PC-9 (cell line): ENCODE measurements at regions of chrX and their contacts with region 1.

Region 1: GRCh38 chrX:108250654-108251579 is 159.3 kb downstream of the ATG4A start:
- DNase-seq: no peak
- H3K4me3 ChIP-seq: no peak overlapping the region
- H3K27ac ChIP-seq: no peak overlapping the region
- H3K4me1 ChIP-seq: peaks cover 14% of the 10 kb centered on the region
- H3K27me3 ChIP-seq: no peaks in the 10 kb centered on the region
- CTCF ChIP-seq: no peak

Region 2: GRCh38 chrX:108304210-108304609 is 53.3 kb after region 1 on chrX:
- CTCF ChIA-PET with region 1: no interaction called
- POLR2A ChIA-PET with region 1: no interaction called
- intact Hi-C with region 1: no loop called
- DNase-seq: no peak
- H3K4me3 ChIP-seq: no peak overlapping the region
- H3K27ac ChIP-seq: no peak overlapping the region
- H3K4me1 ChIP-seq: no peaks in the 10 kb centered on the region
- H3K27me3 ChIP-seq: no peaks in the 10 kb centered on the region
- CTCF ChIP-seq: peak; percentile 58

Region 3: GRCh38 chrX:108366644-108367406 is 115.9 kb after region 1 on chrX:
- CTCF ChIA-PET with region 1: no interaction called
- POLR2A ChIA-PET with region 1: interaction called, 33 read pairs
- intact Hi-C with region 1: no loop called
- DNase-seq: no peak
- H3K4me3 ChIP-seq: no peak overlapping the region
- H3K27ac ChIP-seq: no peak overlapping the region
- H3K4me1 ChIP-seq: no peaks in the 10 kb centered on the region
- H3K27me3 ChIP-seq: no peaks in the 10 kb centered on the region
- CTCF ChIP-seq: no peak